Activated CD4-positive, alpha-beta memory T cell treated with anti-CD3 and anti-CD28 coated beads for 36 hours (primary cell): ENCODE measurements at regions of chr9 and their contacts with region 1.

Region 1: GRCh38 chr9:3385871-3386270 is 139.9 kb downstream of the RFX3 start:
- DNase-seq: peak; percentile 65
- H3K4me3 Mint-ChIP-seq: no peak overlapping the region
- H3K27ac Mint-ChIP-seq: no peak overlapping the region
- H3K4me1 Mint-ChIP-seq: peaks cover 29% of the 10 kb centered on the region
- H3K27me3 Mint-ChIP-seq: no peaks in the 10 kb centered on the region

Region 2: GRCh38 chr9:3398232-3398648 is 12.4 kb after region 1 on chr9:
- CTCF ChIA-PET with region 1: interaction called, 4 read pairs
- POLR2A ChIA-PET with region 1: no interaction called
- intact Hi-C with region 1: loop called (anchors 1 kb)
- DNase-seq: no peak
- H3K4me3 Mint-ChIP-seq: peak overlapping the region; percentile 16
- H3K27ac Mint-ChIP-seq: peak overlapping the region; percentile 56
- H3K4me1 Mint-ChIP-seq: peaks cover 18% of the 10 kb centered on the region
- H3K27me3 Mint-ChIP-seq: no peaks in the 10 kb centered on the region

Region 3: GRCh38 chr9:3403315-3403714 is 17.4 kb after region 1 on chr9:
- CTCF ChIA-PET with region 1: interaction called, 4 read pairs
- POLR2A ChIA-PET with region 1: no interaction called
- intact Hi-C with region 1: loop called (anchors 1 kb)
- DNase-seq: no peak
- H3K4me3 Mint-ChIP-seq: no peak overlapping the region
- H3K27ac Mint-ChIP-seq: no peak overlapping the region
- H3K4me1 Mint-ChIP-seq: peaks cover 25% of the 10 kb centered on the region
- H3K27me3 Mint-ChIP-seq: no peaks in the 10 kb centered on the region

Region 4: DNA sequence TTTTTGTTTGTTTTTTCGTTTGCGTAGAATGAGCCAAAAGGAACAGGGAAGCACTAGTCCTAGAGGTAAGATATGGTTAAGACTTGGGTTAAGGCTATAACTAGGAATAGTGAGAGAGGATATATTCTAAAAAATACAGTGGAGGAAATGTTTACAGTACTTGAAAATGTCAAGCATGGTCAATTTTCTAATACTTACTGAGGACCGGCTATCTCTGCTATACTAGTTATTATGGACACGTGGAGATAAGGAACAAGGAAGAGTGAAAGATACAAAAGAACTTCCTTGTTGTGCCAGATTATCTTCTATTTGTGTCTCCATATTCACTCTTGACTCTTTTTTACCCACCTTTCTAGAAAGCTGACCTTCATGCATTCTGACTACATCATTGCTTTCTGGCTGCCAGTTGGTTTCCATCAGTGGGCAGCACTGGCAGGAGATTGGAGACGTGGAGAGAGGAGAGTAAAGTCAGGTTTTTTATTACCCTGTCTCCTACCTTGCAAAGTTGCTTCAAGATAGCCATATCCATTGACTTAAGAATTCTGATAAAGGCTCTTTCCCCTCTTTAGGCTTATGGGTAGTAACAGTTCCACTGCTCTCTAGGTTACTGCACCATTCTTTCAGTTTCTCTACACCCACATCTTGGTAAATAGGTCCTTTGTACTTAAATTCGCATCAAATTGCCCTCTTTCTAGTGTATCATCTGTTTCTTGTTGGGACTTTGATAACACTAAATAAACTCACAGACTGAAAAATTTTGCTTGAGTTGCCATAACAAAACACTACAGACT is 148.9 kb after region 1 on chr9:
- CTCF ChIA-PET with region 1: no interaction called
- POLR2A ChIA-PET with region 1: no interaction called
- intact Hi-C with region 1: no loop called
- DNase-seq: no peak
- H3K4me3 Mint-ChIP-seq: no peak overlapping the region
- H3K27ac Mint-ChIP-seq: peak overlapping the region; percentile 25
- H3K4me1 Mint-ChIP-seq: peaks cover 26% of the 10 kb centered on the region
- H3K27me3 Mint-ChIP-seq: no peaks in the 10 kb centered on the region

Region 5: GRCh38 chr9:4207881-4208615 is 822.2 kb after region 1 on chr9:
- CTCF ChIA-PET with region 1: no interaction called
- POLR2A ChIA-PET with region 1: no interaction called
- intact Hi-C with region 1: no loop called
- DNase-seq: no peak
- H3K4me3 Mint-ChIP-seq: no peak overlapping the region
- H3K27ac Mint-ChIP-seq: no peak overlapping the region
- H3K4me1 Mint-ChIP-seq: no peaks in the 10 kb centered on the region
- H3K27me3 Mint-ChIP-seq: no peaks in the 10 kb centered on the region